ENCODE measurements at regions of chr1 and their contacts with region 1.

Region 1: DNA sequence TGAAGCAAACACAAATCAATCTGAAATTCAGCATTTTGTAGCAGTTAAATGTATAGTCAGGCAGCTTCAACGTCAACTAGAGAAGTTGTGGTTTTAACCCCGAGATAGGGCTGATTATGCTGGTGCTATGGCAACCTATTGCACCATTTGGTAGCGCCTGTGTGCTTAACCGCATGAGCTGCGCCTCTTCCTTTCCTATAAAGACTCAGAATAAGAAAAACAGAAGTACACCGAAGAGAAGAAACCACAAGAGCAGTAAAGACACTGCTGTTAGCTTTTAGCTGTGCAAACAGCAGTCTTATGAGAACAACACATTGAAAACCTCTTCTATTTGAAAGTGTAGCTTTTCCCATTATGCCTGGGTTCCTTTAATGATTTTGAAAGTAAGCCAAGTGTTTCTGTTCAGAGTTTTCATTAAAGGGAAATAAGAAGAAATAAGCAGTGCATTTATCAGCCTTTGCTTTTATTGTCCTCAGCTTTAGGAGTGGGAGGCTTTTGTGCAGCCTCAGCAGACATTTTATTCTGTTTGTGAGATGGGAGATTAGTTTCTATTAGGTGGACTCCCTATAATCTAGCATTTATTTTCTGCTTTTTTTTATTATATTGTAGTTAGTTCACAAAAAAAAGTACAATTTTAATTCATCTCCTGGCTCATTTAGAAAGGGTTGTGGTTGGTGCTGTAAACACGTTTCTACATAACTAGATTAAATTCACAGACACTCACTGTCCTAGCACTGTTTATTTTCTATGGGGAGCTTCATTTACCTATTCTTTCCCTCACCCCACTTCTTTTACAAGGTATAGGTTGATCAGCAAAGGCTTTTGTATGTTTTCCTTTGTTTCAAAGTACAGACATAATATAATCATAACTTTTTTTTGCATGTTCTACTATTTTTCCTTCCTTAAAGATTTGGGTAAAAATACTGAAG is 43.3 kb downstream of the PTPRC start:
- DNase-seq: peak; percentile 97
- ATAC-seq: peak; percentile 93
- H3K4me3 ChIP-seq: peak overlapping the region; percentile 12; the same call in 1 of the 2 replicates
- H3K27ac ChIP-seq: peak overlapping the region; percentile 81
- H3K4me1 ChIP-seq: peaks cover 63% of the 10 kb centered on the region
- H3K27me3 ChIP-seq: no peaks in the 10 kb centered on the region
- CTCF ChIP-seq: no peak
- EP300 ChIP-seq: peak; percentile 77 to 98
- POLR2A ChIP-seq: peak; percentile 48
- RAD21 ChIP-seq: peak; percentile 32

Region 2: GRCh38 chr1:197902454-197903195 is 779.5 kb before region 1 on chr1 and contains the start of gene C1orf53:
- CTCF ChIA-PET with region 1: no interaction called
- POLR2A ChIA-PET with region 1: no interaction called
- RAD21 ChIA-PET with region 1: no interaction called
- SMC1A ChIA-PET with region 1: no interaction called
- in situ Hi-C with region 1: loop called (anchors 25 kb)
- intact Hi-C with region 1: no loop called
- DNase-seq: peak; percentile 24
- ATAC-seq: peak; percentile 99
- H3K4me3 ChIP-seq: peak within 1 kb of the TSS; percentile 65
- H3K27ac ChIP-seq: peak within 1 kb of the TSS; percentile 60
- H3K4me1 ChIP-seq: no peaks in the 10 kb centered on the region
- H3K27me3 ChIP-seq: no peaks in the 10 kb centered on the region; a peak in 2 of 4 replicates
- CTCF ChIP-seq: no peak
- EP300 ChIP-seq: no peak
- POLR2A ChIP-seq: peak; percentile 90
- RAD21 ChIP-seq: no peak
- polyA plus RNA-seq, gene C1orf53: 0.39 to 0.42 TPM

Region 3: GRCh38 chr1:198359024-198359653 is 323.0 kb before region 1 on chr1:
- CTCF ChIA-PET with region 1: interaction called, 4 read pairs
- POLR2A ChIA-PET with region 1: no interaction called
- RAD21 ChIA-PET with region 1: interaction called, 3 read pairs
- SMC1A ChIA-PET with region 1: interaction called, 3 read pairs
- in situ Hi-C with region 1: no loop called
- intact Hi-C with region 1: loop called (anchors 5 kb)
- DNase-seq: no peak
- ATAC-seq: peak; percentile 70
- H3K4me3 ChIP-seq: no peak overlapping the region
- H3K27ac ChIP-seq: no peak overlapping the region
- H3K4me1 ChIP-seq: no peaks in the 10 kb centered on the region
- H3K27me3 ChIP-seq: no peaks in the 10 kb centered on the region
- CTCF ChIP-seq: peak; percentile 39 to 50 (median 45); a peak in 4 of 6 replicates
- EP300 ChIP-seq: no peak
- POLR2A ChIP-seq: no peak
- RAD21 ChIP-seq: peak; percentile 59

Region 4: GRCh38 chr1:198534548-198535418 is 147.3 kb before region 1 on chr1:
- CTCF ChIA-PET with region 1: interaction called, 4 read pairs
- POLR2A ChIA-PET with region 1: no interaction called
- RAD21 ChIA-PET with region 1: no interaction called
- SMC1A ChIA-PET with region 1: interaction called, 14 read pairs
- in situ Hi-C with region 1: no loop called
- intact Hi-C with region 1: no loop called
- DNase-seq: no peak
- ATAC-seq: peak; percentile 22; the same call in 1 of the 3 replicates
- H3K4me3 ChIP-seq: no peak overlapping the region
- H3K27ac ChIP-seq: no peak overlapping the region
- H3K4me1 ChIP-seq: no peaks in the 10 kb centered on the region
- H3K27me3 ChIP-seq: no peaks in the 10 kb centered on the region
- CTCF ChIP-seq: no peak
- EP300 ChIP-seq: no peak
- POLR2A ChIP-seq: no peak
- RAD21 ChIP-seq: no peak

Region 5: DNA sequence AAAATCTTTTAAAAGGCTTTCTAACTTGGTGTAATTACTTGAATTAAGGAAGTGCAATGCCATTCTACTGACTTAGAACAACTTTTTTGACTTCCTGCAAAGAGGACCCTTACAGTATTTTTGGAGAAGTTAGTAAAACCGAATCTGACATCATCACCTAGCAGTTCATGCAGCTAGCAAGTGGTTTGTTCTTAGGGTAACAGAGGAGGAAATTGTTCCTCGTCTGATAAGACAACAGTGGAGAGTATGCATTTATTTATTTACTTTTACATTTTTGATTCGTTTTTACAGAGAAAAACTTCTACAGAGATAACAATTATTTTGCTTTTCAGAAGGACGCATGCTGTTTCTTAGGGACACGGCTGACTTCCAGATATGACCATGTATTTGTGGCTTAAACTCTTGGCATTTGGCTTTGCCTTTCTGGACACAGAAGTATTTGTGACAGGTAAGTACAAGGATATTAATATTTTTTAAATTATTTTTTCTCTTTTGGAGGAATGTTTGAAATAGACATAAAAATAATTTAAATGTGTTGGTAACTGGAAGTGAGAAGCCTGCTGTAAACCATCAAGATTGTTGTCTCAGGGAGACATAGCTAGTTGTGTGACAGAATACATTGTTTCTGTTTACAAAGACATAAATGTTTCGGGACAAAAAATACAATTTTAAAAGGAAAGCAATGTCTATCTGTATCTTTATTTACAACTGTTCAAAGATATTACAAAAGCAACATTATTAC is 43.0 kb before region 1 on chr1 and contains the start of gene PTPRC:
- CTCF ChIA-PET with region 1: interaction called, 6 read pairs
- POLR2A ChIA-PET with region 1: interaction called, 6 read pairs
- RAD21 ChIA-PET with region 1: interaction called, 23 read pairs
- SMC1A ChIA-PET with region 1: interaction called, 80 read pairs
- in situ Hi-C with region 1: no loop called
- intact Hi-C with region 1: loop called (anchors 1 kb)
- DNase-seq: peak; percentile 74
- ATAC-seq: peak; percentile 82
- H3K4me3 ChIP-seq: peak within 1 kb of the TSS; percentile 69
- H3K27ac ChIP-seq: peak within 1 kb of the TSS; percentile 68
- H3K4me1 ChIP-seq: peaks cover 13% of the 10 kb centered on the region
- H3K27me3 ChIP-seq: no peaks in the 10 kb centered on the region
- CTCF ChIP-seq: no peak
- EP300 ChIP-seq: peak in 1 of 2 experiments; percentile 75; a peak in 2 of 4 replicates
- POLR2A ChIP-seq: no peak
- RAD21 ChIP-seq: peak; percentile 24; the same call in 1 of the 2 replicates
- polyA plus RNA-seq, gene PTPRC: 72.9 to 73.6 TPM

Region 6: DNA sequence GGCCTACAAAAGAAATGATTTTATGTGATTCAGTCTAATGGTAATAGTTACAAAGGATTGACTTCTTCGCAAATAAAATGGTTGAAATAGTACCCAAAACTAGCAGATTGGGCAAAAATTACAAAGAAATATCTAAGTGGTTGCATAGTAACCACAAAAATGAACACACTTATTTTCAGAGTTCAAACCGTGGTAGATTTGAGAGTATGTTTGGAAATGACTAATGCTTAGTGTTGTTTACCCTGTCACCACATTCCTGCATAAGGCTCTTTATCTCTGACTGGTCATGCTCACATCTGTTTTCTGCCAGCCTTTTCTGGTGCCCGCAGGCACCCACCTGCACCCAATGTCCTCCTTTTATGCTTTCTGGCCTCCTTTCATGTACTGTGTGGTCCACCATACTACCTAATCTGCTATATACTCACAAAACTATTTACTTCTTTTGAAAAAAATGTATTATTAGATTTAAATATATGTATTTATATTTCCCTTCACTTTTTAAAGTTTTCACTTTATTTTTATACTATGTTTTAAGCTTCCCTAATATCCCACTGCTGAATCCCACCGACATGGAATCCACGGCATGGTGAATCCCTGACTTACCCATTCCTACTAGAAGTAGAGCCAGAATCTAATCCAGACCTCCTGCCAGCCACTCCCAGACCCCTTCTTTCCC is 12.9 kb before region 1 on chr1:
- CTCF ChIA-PET with region 1: interaction called, 17 read pairs
- POLR2A ChIA-PET with region 1: interaction called, 14 read pairs
- RAD21 ChIA-PET with region 1: interaction called, 27 read pairs
- SMC1A ChIA-PET with region 1: interaction called, 100 read pairs
- in situ Hi-C with region 1: no loop called
- intact Hi-C with region 1: loop called (anchors 2 kb)
- DNase-seq: peak; percentile 77
- ATAC-seq: peak; percentile 83
- H3K4me3 ChIP-seq: no peak overlapping the region
- H3K27ac ChIP-seq: peak overlapping the region; percentile 18; the same call in 1 of the 2 replicates
- H3K4me1 ChIP-seq: peaks cover 16% of the 10 kb centered on the region
- H3K27me3 ChIP-seq: no peaks in the 10 kb centered on the region
- CTCF ChIP-seq: no peak
- EP300 ChIP-seq: peak; percentile 27 to 67; a peak in 2 of 4 replicates
- POLR2A ChIP-seq: no peak
- RAD21 ChIP-seq: no peak

Region 7: GRCh38 chr1:198749279-198749678 is 67.2 kb after region 1 on chr1:
- CTCF ChIA-PET with region 1: no interaction called
- POLR2A ChIA-PET with region 1: no interaction called
- RAD21 ChIA-PET with region 1: no interaction called
- SMC1A ChIA-PET with region 1: no interaction called
- in situ Hi-C with region 1: no loop called
- intact Hi-C with region 1: no loop called
- DNase-seq: no peak
- ATAC-seq: no peak
- H3K4me3 ChIP-seq: no peak overlapping the region
- H3K27ac ChIP-seq: no peak overlapping the region
- H3K4me1 ChIP-seq: no peaks in the 10 kb centered on the region
- H3K27me3 ChIP-seq: no peaks in the 10 kb centered on the region
- CTCF ChIP-seq: no peak
- EP300 ChIP-seq: no peak
- POLR2A ChIP-seq: no peak
- RAD21 ChIP-seq: no peak

Region 8: GRCh38 chr1:198809247-198809646 is 127.2 kb after region 1 on chr1:
- CTCF ChIA-PET with region 1: no interaction called
- POLR2A ChIA-PET with region 1: no interaction called
- RAD21 ChIA-PET with region 1: no interaction called
- SMC1A ChIA-PET with region 1: no interaction called
- in situ Hi-C with region 1: no loop called
- intact Hi-C with region 1: no loop called
- DNase-seq: no peak
- ATAC-seq: no peak
- H3K4me3 ChIP-seq: no peak overlapping the region
- H3K27ac ChIP-seq: no peak overlapping the region
- H3K4me1 ChIP-seq: no peaks in the 10 kb centered on the region
- H3K27me3 ChIP-seq: no peaks in the 10 kb centered on the region
- CTCF ChIP-seq: no peak
- EP300 ChIP-seq: no peak
- POLR2A ChIP-seq: no peak
- RAD21 ChIP-seq: no peak